Activated CD8-positive, alpha-beta T cell treated with anti-CD3 and anti-CD28 coated beads for 36 hours (primary cell): ENCODE measurements at regions of chr13 and their contacts with region 1.

Region 1: DNA sequence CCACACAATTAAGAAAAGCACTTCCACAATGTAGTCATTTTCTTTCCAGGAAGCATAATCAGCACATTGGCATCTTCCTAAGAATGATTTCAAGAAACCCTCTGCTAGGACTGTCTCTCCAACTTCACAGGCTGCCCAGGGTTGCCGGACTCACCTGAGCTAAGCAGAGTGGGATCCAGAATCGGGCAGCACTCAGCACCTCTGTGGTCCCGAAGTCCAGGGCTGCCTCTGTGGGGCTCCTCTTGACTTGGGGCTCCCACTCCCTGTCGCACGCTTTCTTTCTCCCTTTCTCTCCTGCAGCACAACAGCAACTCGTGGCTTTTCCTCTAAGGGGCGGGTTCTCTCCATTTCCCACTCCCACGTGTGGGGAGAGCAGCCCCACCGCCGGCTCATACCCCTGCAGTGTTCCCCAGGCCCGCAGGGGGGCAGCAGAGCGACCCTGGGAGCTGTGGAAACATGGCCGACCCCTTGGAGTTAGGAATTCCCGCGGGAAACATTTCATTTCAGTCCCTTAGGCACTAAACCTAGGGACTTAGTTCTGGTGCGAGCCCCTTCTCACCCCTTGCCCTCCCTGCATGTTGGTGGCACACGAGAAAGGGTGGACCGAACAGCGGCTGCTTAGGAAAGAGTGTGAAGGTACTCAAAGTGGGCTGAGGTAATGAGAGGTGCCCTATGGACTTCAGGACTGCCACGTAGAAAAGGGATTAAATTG is at the start of gene TMEM272:
- DNase-seq: peak; percentile 70
- ATAC-seq: peak; percentile 91
- H3K4me3 Mint-ChIP-seq: peak within 1 kb of the TSS; percentile 60
- H3K27ac Mint-ChIP-seq: no peak within 1 kb of the TSS
- H3K4me1 Mint-ChIP-seq: peaks cover 12% of the 10 kb centered on the region
- H3K27me3 Mint-ChIP-seq: peaks cover 4% of the 10 kb centered on the region
- CTCF ChIP-seq: peak; percentile 98
- total RNA-seq, gene TMEM272: 0.18 to 0.32 TPM

Region 2: GRCh38 chr13:51825165-51825592 is 19.8 kb before region 1 on chr13:
- CTCF ChIA-PET with region 1: interaction called, 21 read pairs
- POLR2A ChIA-PET with region 1: interaction called, 3 read pairs
- intact Hi-C with region 1: no loop called
- DNase-seq: no peak
- ATAC-seq: peak; percentile 26
- H3K4me3 Mint-ChIP-seq: peak overlapping the region; percentile 74
- H3K27ac Mint-ChIP-seq: peak overlapping the region; percentile 94
- H3K4me1 Mint-ChIP-seq: peaks cover 85% of the 10 kb centered on the region
- H3K27me3 Mint-ChIP-seq: no peaks in the 10 kb centered on the region
- CTCF ChIP-seq: no peak

Region 3: GRCh38 chr13:51832471-51833152 is 12.4 kb before region 1 on chr13:
- CTCF ChIA-PET with region 1: interaction called, 21 read pairs
- POLR2A ChIA-PET with region 1: no interaction called
- intact Hi-C with region 1: no loop called
- DNase-seq: peak; percentile 73
- ATAC-seq: peak; percentile 98
- H3K4me3 Mint-ChIP-seq: no peak overlapping the region
- H3K27ac Mint-ChIP-seq: no peak overlapping the region
- H3K4me1 Mint-ChIP-seq: peaks cover 59% of the 10 kb centered on the region
- H3K27me3 Mint-ChIP-seq: no peaks in the 10 kb centered on the region
- CTCF ChIP-seq: peak; percentile 68

Region 4: GRCh38 chr13:51861723-51862300 is 16.8 kb after region 1 on chr13 and contains the start of gene CCDC70:
- CTCF ChIA-PET with region 1: interaction called, 26 read pairs
- POLR2A ChIA-PET with region 1: no interaction called
- intact Hi-C with region 1: no loop called
- DNase-seq: peak; percentile 70
- ATAC-seq: peak; percentile 94
- H3K4me3 Mint-ChIP-seq: peak within 1 kb of the TSS; percentile 23
- H3K27ac Mint-ChIP-seq: peak within 1 kb of the TSS; percentile 46
- H3K4me1 Mint-ChIP-seq: peaks cover 22% of the 10 kb centered on the region
- H3K27me3 Mint-ChIP-seq: peaks cover 7% of the 10 kb centered on the region
- CTCF ChIP-seq: no peak
- total RNA-seq, gene CCDC70: 0.45 to 0.72 TPM